SK-N-SH (cell line): ENCODE measurements at regions of chr15 and their contacts with region 1.

Region 1: GRCh38 chr15:70097337-70098169 is at the start of gene TLE3:
- DNase-seq: peak; percentile 99
- H3K4me3 ChIP-seq: peak within 1 kb of the TSS; percentile 85 to 94
- H3K27ac ChIP-seq: peak within 1 kb of the TSS; percentile 77 to 90
- H3K4me1 ChIP-seq: peaks cover 21 to 45% of the 10 kb centered on the region in 2 experiments
- H3K27me3 ChIP-seq: peaks cover 13% of the 10 kb centered on the region
- CTCF ChIP-seq: peak; percentile 43
- EP300 ChIP-seq: peak; percentile 11 to 38; a peak in 1 of 4 replicates
- RAD21 ChIP-seq: peak; percentile 66
- polyA plus RNA-seq, gene TLE3: 8.4 and 14.7 TPM in 2 replicates

Region 2: DNA sequence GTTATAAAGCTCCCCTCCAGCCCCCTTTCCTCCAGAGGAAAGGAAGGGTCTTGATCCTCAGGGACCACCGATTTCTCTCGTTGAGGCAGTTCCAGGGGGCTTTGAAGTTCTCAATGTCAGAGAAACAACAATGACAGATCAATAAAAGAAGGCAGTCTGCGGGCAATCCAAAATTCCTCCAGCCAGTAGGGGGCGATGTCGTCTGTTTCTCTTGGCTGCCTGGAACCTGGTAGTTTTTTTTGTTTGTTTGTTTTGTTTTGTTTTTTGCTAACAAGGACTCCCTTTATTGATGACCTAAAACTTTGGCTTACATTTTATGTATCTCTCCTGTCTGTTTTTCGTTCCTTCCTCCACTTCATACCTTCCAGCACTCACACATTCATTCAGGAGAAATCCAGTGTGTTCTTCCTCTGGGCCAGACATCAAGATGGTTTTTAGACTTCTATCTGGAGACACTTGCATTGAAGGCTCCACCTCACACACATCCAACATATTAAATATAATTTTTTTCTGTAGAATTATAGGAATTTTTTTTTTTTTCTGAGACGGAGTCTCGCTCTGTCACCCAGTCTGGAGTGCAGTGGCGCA is 368.3 kb before region 1 on chr15:
- CTCF ChIA-PET with region 1: interaction called, 11 read pairs
- POLR2A ChIA-PET with region 1: no interaction called
- DNase-seq: peak; percentile 56
- H3K4me3 ChIP-seq: no peak overlapping the region
- H3K27ac ChIP-seq: no peak overlapping the region
- H3K4me1 ChIP-seq: peaks cover 0 to 10% of the 10 kb centered on the region in 2 experiments; a peak in 1 of 4 replicates
- H3K27me3 ChIP-seq: peaks cover 18% of the 10 kb centered on the region; the same call in 1 of the 2 replicates
- CTCF ChIP-seq: peak; percentile 84
- EP300 ChIP-seq: no peak
- RAD21 ChIP-seq: peak; percentile 76

Region 3: GRCh38 chr15:70033529-70034140 is 63.9 kb before region 1 on chr15:
- CTCF ChIA-PET with region 1: interaction called, 13 read pairs
- POLR2A ChIA-PET with region 1: interaction called, 7 read pairs
- DNase-seq: peak; percentile 94
- H3K4me3 ChIP-seq: peak overlapping the region; percentile 36 to 44; a peak in 3 of 4 replicates
- H3K27ac ChIP-seq: no peak overlapping the region; a peak in 1 of 4 replicates
- H3K4me1 ChIP-seq: peaks cover 8 to 25% of the 10 kb centered on the region in 2 experiments; a peak in 2 of 4 replicates
- H3K27me3 ChIP-seq: peaks cover 25% of the 10 kb centered on the region
- CTCF ChIP-seq: no peak
- EP300 ChIP-seq: peak; percentile 33 to 95; a peak in 3 of 4 replicates
- RAD21 ChIP-seq: peak; percentile 24

Region 4: GRCh38 chr15:70062321-70062956 is 35.1 kb before region 1 on chr15:
- CTCF ChIA-PET with region 1: interaction called, 32 read pairs
- POLR2A ChIA-PET with region 1: interaction called, 14 read pairs
- DNase-seq: peak; percentile 91
- H3K4me3 ChIP-seq: peak overlapping the region; percentile 19 to 25; a peak in 1 of 4 replicates
- H3K27ac ChIP-seq: peak overlapping the region; percentile 63 to 78
- H3K4me1 ChIP-seq: peaks cover 13 to 67% of the 10 kb centered on the region in 2 experiments; a peak in 3 of 4 replicates
- H3K27me3 ChIP-seq: no peaks in the 10 kb centered on the region
- CTCF ChIP-seq: no peak
- EP300 ChIP-seq: 0 out of 4 replicates have a peak, but pooled peaks have one; percentile 7 to 54
- RAD21 ChIP-seq: peak; percentile 2; the same call in 1 of the 2 replicates

Region 5: DNA sequence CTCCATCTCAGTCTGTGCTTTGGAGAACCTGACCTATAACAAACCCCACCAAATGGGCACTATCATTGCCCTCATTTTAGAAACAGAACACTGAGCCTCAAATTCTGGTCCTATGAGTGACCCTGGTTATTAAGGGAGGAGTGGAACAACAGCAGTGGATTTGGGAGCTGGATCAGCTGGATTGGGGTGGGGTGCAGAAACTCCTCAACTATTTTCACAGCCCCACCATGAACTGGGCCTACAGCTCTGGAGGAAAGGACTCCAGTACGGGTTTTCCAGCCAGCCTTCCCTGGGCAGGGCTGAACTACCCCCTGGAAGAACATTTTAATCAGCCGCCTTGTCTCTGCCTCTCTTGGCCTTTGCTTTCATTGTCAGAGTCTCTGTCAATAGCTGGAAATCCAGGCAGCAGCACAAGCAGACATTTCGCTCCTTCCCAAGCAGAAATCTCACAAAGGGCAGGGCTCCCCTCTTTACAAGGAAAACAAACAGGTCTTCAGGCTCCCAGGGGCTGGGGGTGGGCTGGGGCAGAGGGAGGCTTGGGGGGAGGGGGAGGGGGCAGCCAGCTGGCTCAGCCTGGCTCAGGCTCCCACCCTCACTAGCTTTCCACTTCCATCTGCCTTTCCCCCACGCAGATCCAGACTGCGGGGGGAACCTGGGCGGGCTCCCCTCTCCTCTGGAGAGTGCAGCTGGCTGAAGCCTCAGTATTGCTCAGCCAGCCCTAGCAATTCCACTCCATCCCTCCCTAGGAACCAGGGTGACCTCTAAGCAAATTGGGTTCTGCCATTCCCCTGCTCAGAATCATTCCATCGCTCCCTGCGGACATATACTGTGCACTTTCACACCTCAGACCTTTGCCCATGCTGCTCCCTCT is 13.9 kb after region 1 on chr15:
- CTCF ChIA-PET with region 1: interaction called, 28 read pairs
- POLR2A ChIA-PET with region 1: interaction called, 12 read pairs
- DNase-seq: peak; percentile 85
- H3K4me3 ChIP-seq: peak overlapping the region in 1 of 2 experiments; percentile 23; a peak in 1 of 4 replicates
- H3K27ac ChIP-seq: peak overlapping the region; percentile 36 to 91; a peak in 3 of 4 replicates
- H3K4me1 ChIP-seq: peaks cover 5 to 26% of the 10 kb centered on the region in 2 experiments; a peak in 3 of 4 replicates
- H3K27me3 ChIP-seq: no peaks in the 10 kb centered on the region; the same call in none of the 2 replicates
- CTCF ChIP-seq: no peak
- EP300 ChIP-seq: peak in 1 of 2 experiments; percentile 60; a peak in 1 of 4 replicates
- RAD21 ChIP-seq: peak; percentile 35

Region 6: DNA sequence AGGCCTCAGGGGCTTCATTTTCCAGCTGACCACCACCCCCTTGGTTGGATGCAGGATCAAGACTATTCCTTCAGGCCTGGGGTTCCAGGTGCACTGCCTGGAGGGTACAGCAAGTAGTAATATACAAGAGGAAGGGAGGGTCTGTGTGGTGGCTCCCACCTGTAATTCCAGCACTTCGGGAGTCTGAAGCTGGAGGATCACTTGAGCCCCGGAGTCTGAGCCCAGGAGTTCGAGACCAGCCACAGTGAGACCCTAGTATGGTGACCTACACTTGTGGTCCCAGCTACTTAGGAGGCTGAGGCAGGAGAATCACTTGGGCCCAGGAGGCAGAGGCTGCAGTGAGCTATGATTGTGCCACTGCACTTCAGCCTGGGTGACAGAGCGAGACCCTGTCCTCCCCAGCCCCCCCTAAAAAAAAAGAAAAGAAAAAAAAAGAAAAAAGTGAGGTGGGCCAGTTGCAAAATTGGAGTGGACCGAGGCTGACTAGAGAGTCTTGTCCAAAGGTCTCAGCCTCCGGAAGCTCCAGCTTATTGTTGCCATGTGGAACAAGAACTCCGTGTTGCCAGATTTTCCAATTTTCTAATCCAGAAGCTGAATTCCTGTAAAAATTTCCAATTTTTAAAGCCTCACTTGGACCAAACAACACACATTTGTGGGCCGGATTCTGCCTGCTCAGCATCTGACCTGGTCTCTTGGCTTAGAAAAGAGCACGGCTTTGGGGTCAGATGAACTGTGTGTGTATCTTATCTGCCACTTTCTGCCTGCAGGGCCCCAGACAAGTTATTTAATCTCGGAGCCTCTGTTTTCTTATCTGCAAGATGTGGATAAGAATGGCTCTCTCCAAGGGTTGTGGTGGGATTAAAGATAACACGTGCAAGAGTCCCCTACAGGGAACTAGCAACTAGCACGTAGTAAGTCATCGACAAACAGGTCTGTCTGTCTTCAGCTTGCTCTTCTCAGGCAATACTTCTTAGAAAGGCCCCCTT is 73.6 kb after region 1 on chr15:
- CTCF ChIA-PET with region 1: interaction called, 11 read pairs
- POLR2A ChIA-PET with region 1: interaction called, 3 read pairs
- DNase-seq: peak; percentile 59
- H3K4me3 ChIP-seq: no peak overlapping the region
- H3K27ac ChIP-seq: peak overlapping the region in 1 of 2 experiments; percentile 95; a peak in 2 of 4 replicates
- H3K4me1 ChIP-seq: peaks cover 0 to 55% of the 10 kb centered on the region in 2 experiments; a peak in 2 of 4 replicates
- H3K27me3 ChIP-seq: no peaks in the 10 kb centered on the region; the same call in 1 of the 2 replicates
- CTCF ChIP-seq: no peak
- EP300 ChIP-seq: peak in 1 of 2 experiments; percentile 97; a peak in 2 of 4 replicates
- RAD21 ChIP-seq: no peak

Region 7: GRCh38 chr15:70200511-70201424 is 103.2 kb after region 1 on chr15:
- CTCF ChIA-PET with region 1: interaction called, 14 read pairs
- POLR2A ChIA-PET with region 1: interaction called, 5 read pairs
- DNase-seq: peak; percentile 80
- H3K4me3 ChIP-seq: no peak overlapping the region
- H3K27ac ChIP-seq: peak overlapping the region in 1 of 2 experiments; percentile 95; a peak in 2 of 4 replicates
- H3K4me1 ChIP-seq: peaks cover 29 to 95% of the 10 kb centered on the region in 2 experiments
- H3K27me3 ChIP-seq: no peaks in the 10 kb centered on the region
- CTCF ChIP-seq: no peak
- EP300 ChIP-seq: peak in 1 of 2 experiments; percentile 95; a peak in 2 of 4 replicates
- RAD21 ChIP-seq: peak; percentile 24; the same call in 1 of the 2 replicates